A673 (cell line): ENCODE measurements at regions of chr7 and their contacts with region 1.

Region 1: GRCh38 chr7:156969972-156970420 is 20.5 kb downstream of the NOM1 start:
- DNase-seq: peak; percentile 29
- H3K4me3 ChIP-seq: no peak overlapping the region
- H3K27ac ChIP-seq: no peak overlapping the region
- H3K4me1 ChIP-seq: no peaks in the 10 kb centered on the region
- H3K27me3 ChIP-seq: no peaks in the 10 kb centered on the region
- CTCF ChIP-seq: peak; percentile 47

Region 2: GRCh38 chr7:157273208-157274093 is 303.5 kb after region 1 on chr7:
- CTCF ChIA-PET with region 1: no interaction called
- POLR2A ChIA-PET with region 1: no interaction called
- intact Hi-C with region 1: loop called (anchors 5 kb)
- DNase-seq: peak; percentile 62
- H3K4me3 ChIP-seq: no peak overlapping the region
- H3K27ac ChIP-seq: no peak overlapping the region
- H3K4me1 ChIP-seq: peaks cover 9% of the 10 kb centered on the region
- H3K27me3 ChIP-seq: no peaks in the 10 kb centered on the region
- CTCF ChIP-seq: peak; percentile 94